CD8-positive, alpha-beta T cell (primary cell): ENCODE measurements at regions of chr6 and their contacts with region 1.

Region 1: GRCh38 chr6:139134817-139135581 is at the start of gene HECA:
- DNase-seq: peak; percentile 98 to 100 (median 99)
- ATAC-seq: peak; percentile 81
- H3K4me3 ChIP-seq: peak within 1 kb of the TSS; percentile 79 to 84
- H3K4me3 Mint-ChIP-seq: peak within 1 kb of the TSS; percentile 91
- H3K27ac ChIP-seq: peak within 1 kb of the TSS; percentile 96 to 97
- H3K27ac Mint-ChIP-seq: peak within 1 kb of the TSS; percentile 98
- H3K4me1 ChIP-seq: peaks cover 55% of the 10 kb centered on the region
- H3K4me1 Mint-ChIP-seq: peaks cover 67% of the 10 kb centered on the region
- H3K27me3 ChIP-seq: no peaks in the 10 kb centered on the region
- H3K27me3 Mint-ChIP-seq: no peaks in the 10 kb centered on the region
- CTCF ChIP-seq: no peak
- total RNA-seq, gene HECA: 231 to 234 TPM

Region 2: DNA sequence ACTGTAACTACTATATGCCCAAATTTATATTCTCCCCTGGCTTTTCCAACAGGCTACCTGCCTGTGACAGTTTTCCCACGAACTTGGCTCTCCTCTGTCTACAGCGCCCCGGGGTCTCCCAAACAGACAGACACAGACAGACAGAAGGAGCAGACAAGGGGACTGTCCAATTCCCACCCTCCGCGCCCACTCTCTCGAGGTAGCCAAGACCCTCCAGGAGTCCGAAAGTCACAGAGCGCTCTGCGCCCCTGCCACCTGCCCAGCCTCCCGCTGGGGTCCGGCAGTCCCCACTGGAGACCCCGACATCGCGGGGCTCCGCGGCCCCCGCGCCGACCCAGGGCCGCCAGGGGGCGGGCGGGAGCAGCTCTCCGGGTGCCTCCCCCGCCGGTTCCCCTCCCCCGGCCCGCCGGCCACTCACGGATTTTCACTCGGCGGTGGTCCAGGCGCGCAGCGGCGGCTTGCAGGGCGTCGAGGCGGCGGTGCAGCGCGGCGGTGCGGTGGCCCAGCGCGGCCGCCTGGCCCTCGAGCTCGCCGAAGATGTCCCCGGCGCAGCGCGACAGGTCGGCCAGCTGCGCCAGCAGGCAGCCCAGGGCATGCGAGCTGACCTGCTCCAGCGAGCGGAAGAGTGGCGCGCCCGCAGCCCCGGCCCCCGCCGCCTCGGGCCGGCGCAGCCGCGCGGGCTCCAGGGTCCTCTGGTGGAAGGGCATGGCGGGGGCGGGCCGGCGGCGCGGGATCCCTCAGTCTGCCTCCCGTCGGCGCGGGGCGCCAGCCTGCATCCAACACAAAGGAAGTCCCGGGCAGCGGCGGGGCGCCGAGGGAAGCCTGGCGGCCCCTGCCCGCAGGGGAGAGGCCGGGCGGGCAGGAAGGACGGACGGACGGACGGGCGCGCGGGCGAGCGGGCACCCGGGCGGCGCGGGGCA is 442.7 kb before region 1 on chr6:
- CTCF ChIA-PET with region 1: no interaction called
- POLR2A ChIA-PET with region 1: no interaction called
- intact Hi-C with region 1: loop called in 1 of 2 experiments (anchors 5 kb)
- DNase-seq: peak; percentile 14 to 78 (median 48)
- ATAC-seq: peak; percentile 68
- H3K4me3 ChIP-seq: peak overlapping the region in 1 of 2 experiments; percentile 23
- H3K4me3 Mint-ChIP-seq: peak overlapping the region; percentile 81
- H3K27ac ChIP-seq: no peak overlapping the region
- H3K27ac Mint-ChIP-seq: no peak overlapping the region
- H3K4me1 ChIP-seq: peaks cover 5% of the 10 kb centered on the region
- H3K4me1 Mint-ChIP-seq: peaks cover 10% of the 10 kb centered on the region
- H3K27me3 ChIP-seq: peaks cover 0 to 6% of the 10 kb centered on the region in 2 experiments
- H3K27me3 Mint-ChIP-seq: peaks cover 30% of the 10 kb centered on the region
- CTCF ChIP-seq: peak; percentile 65

Region 3: DNA sequence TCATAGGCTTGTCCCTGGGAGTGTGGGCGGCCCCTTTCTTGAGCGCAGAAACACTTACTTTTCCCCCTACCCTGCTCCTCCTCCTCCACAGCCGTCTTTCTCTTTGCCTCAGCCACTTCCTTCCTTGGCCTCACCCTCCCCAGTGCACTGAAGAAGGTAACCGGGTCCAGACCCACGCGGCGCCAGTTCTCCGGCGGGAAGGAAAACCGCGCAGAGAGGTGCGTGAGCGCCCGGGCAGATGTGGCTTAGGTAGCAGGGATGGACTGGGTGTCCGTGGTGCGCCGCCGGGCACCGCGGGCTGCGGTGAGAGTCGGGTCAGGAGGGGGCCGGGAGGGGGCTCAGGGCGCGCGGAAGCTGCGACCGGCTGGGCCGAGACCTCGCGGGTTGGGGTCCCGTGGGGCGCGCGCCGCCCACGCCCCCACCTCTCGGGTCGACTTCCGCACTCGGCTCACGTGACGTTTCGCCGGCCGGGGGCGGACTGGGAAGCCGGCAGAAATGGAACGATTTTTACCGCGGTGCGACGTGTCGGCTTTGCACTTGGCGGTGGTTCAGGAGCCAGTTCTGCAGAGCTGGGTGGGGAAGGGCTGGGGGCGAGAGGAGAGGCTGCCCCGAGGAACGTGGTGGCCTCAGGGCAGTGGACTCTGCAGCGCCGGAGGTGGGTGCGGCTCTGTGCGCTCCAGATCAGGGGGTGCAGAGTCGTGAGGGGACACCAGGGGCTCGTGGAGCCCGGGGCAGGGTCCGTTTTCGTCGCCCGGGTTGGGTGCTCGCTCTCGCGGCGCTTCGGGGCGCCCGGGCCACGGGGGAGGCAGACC is 106.1 kb before region 1 on chr6 and contains the start of gene ABRACL:
- CTCF ChIA-PET with region 1: no interaction called
- POLR2A ChIA-PET with region 1: interaction called, 8 read pairs
- intact Hi-C with region 1: loop called in 1 of 2 experiments (anchors 2 kb)
- DNase-seq: peak; percentile 38 to 89 (median 74)
- ATAC-seq: peak; percentile 88
- H3K4me3 ChIP-seq: peak within 1 kb of the TSS; percentile 93 to 99
- H3K4me3 Mint-ChIP-seq: no peak within 1 kb of the TSS
- H3K27ac ChIP-seq: peak within 1 kb of the TSS; percentile 86 to 90
- H3K27ac Mint-ChIP-seq: peak within 1 kb of the TSS; percentile 96
- H3K4me1 ChIP-seq: peaks cover 24% of the 10 kb centered on the region
- H3K4me1 Mint-ChIP-seq: peaks cover 31% of the 10 kb centered on the region
- H3K27me3 ChIP-seq: no peaks in the 10 kb centered on the region
- H3K27me3 Mint-ChIP-seq: no peaks in the 10 kb centered on the region
- CTCF ChIP-seq: no peak
- total RNA-seq, gene ABRACL: 30.4 to 30.5 TPM

Region 4: GRCh38 chr6:139062932-139063646 is 71.9 kb before region 1 on chr6:
- CTCF ChIA-PET with region 1: no interaction called
- POLR2A ChIA-PET with region 1: no interaction called
- intact Hi-C with region 1: no loop called
- DNase-seq: no peak
- ATAC-seq: no peak
- H3K4me3 ChIP-seq: no peak overlapping the region
- H3K4me3 Mint-ChIP-seq: no peak overlapping the region
- H3K27ac ChIP-seq: no peak overlapping the region
- H3K27ac Mint-ChIP-seq: no peak overlapping the region
- H3K4me1 ChIP-seq: no peaks in the 10 kb centered on the region
- H3K4me1 Mint-ChIP-seq: no peaks in the 10 kb centered on the region
- H3K27me3 ChIP-seq: no peaks in the 10 kb centered on the region
- H3K27me3 Mint-ChIP-seq: peaks cover 4% of the 10 kb centered on the region
- CTCF ChIP-seq: no peak

Region 5: GRCh38 chr6:139153855-139154254 is 18.9 kb after region 1 on chr6:
- CTCF ChIA-PET with region 1: interaction called, 7 read pairs
- POLR2A ChIA-PET with region 1: interaction called, 14 read pairs
- intact Hi-C with region 1: no loop called
- DNase-seq: no peak
- ATAC-seq: no peak
- H3K4me3 ChIP-seq: no peak overlapping the region
- H3K4me3 Mint-ChIP-seq: peak overlapping the region; percentile 44
- H3K27ac ChIP-seq: peak overlapping the region in 1 of 2 experiments; percentile 4
- H3K27ac Mint-ChIP-seq: peak overlapping the region; percentile 3
- H3K4me1 ChIP-seq: peaks cover 79% of the 10 kb centered on the region
- H3K4me1 Mint-ChIP-seq: peaks cover 83% of the 10 kb centered on the region
- H3K27me3 ChIP-seq: no peaks in the 10 kb centered on the region
- H3K27me3 Mint-ChIP-seq: no peaks in the 10 kb centered on the region
- CTCF ChIP-seq: no peak

Region 6: GRCh38 chr6:139219271-139219729 is 84.3 kb after region 1 on chr6:
- CTCF ChIA-PET with region 1: interaction called, 10 read pairs
- POLR2A ChIA-PET with region 1: no interaction called
- intact Hi-C with region 1: no loop called
- DNase-seq: peak; percentile 40 to 84 (median 73)
- ATAC-seq: peak; percentile 96
- H3K4me3 ChIP-seq: no peak overlapping the region
- H3K4me3 Mint-ChIP-seq: no peak overlapping the region
- H3K27ac ChIP-seq: no peak overlapping the region
- H3K27ac Mint-ChIP-seq: peak overlapping the region; percentile 82
- H3K4me1 ChIP-seq: peaks cover 11% of the 10 kb centered on the region
- H3K4me1 Mint-ChIP-seq: peaks cover 13% of the 10 kb centered on the region
- H3K27me3 ChIP-seq: no peaks in the 10 kb centered on the region
- H3K27me3 Mint-ChIP-seq: no peaks in the 10 kb centered on the region
- CTCF ChIP-seq: peak; percentile 66

Region 7: DNA sequence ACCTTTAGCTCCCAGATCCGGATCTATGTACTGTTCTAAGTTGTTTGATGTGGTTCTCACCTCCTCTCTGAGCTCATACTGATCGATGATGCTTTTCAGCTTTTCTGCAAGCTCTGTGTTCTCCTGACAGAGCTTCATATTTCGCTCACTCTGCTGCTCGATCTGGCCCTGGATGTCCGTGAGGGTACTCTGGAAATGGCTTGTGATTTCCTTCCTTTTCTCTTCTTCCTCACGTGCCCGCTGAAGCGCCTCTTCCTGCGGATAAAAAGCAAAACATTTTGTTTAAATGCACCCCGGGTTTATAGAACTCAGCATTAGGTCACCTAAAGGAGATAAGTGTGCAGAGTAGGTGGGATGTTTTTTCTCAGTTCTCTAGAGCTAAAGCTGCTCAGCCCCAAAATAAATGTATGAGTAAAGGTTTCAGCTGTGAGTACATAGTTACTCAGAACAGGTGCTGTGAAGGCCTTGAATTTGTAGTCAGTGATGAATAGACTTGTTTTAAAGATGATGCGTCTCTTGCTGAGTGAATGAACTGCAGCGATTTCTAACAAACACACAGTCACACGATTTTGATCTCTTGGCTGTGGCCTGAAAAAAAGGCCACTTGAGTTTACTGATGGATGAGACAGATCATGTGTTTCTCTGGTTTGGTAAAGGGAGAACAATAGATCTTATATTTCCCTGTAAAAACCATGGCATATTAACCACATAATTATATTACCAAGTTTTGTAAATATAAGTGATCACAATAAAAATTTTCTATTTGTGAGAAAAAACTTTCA is 127.7 kb after region 1 on chr6:
- CTCF ChIA-PET with region 1: no interaction called
- POLR2A ChIA-PET with region 1: no interaction called
- intact Hi-C with region 1: no loop called
- DNase-seq: peak in 3 of 9 experiments; percentile 10 to 72 (median 52)
- ATAC-seq: peak; percentile 90
- H3K4me3 ChIP-seq: peak overlapping the region in 1 of 2 experiments; percentile 19
- H3K4me3 Mint-ChIP-seq: peak overlapping the region; percentile 77
- H3K27ac ChIP-seq: peak overlapping the region in 1 of 2 experiments; percentile 51
- H3K27ac Mint-ChIP-seq: peak overlapping the region; percentile 84
- H3K4me1 ChIP-seq: peaks cover 13% of the 10 kb centered on the region
- H3K4me1 Mint-ChIP-seq: peaks cover 21% of the 10 kb centered on the region
- H3K27me3 ChIP-seq: no peaks in the 10 kb centered on the region
- H3K27me3 Mint-ChIP-seq: no peaks in the 10 kb centered on the region
- CTCF ChIP-seq: no peak

Region 8: DNA sequence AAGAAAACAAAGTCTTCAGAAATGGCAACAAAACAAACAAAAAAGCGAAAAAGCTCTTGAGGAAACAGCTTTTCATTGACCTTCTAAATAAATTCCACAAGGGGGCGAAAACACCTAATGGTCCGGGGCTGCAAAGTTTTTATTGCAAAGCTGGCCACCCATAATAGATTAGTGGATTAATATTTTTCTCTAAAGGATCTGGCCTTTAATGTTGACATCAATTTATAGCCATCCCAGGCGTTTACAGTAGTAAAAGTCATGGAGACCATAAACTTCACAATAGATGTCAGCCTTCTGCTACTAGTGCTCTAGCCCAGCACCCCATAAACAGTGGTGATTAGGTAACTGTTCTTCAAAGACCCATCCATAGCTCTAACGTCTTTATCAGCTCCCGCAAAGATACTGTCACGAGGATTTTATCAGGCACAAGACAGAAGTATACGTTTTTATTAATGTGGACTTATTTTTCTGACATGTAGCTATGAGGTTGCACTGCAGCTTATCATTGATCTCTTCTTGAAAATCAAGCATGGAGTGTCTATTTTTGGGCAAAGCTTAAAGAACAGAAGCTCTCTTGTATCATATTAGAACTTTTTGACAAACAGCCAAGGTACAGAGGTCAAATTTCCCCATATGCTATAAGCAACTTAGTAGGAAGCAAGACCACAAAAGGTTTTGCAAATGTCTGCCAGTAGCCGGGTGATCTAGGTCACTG is 234.7 kb after region 1 on chr6:
- CTCF ChIA-PET with region 1: interaction called, 16 read pairs
- POLR2A ChIA-PET with region 1: interaction called, 33 read pairs
- intact Hi-C with region 1: loop called (anchors 1 kb)
- DNase-seq: peak in 2 of 9 experiments; percentile 56 to 69
- ATAC-seq: no peak
- H3K4me3 ChIP-seq: no peak overlapping the region
- H3K4me3 Mint-ChIP-seq: peak overlapping the region; percentile 66
- H3K27ac ChIP-seq: peak overlapping the region in 1 of 2 experiments; percentile 86
- H3K27ac Mint-ChIP-seq: peak overlapping the region; percentile 98
- H3K4me1 ChIP-seq: peaks cover 31% of the 10 kb centered on the region
- H3K4me1 Mint-ChIP-seq: peaks cover 49% of the 10 kb centered on the region
- H3K27me3 ChIP-seq: no peaks in the 10 kb centered on the region
- H3K27me3 Mint-ChIP-seq: no peaks in the 10 kb centered on the region
- CTCF ChIP-seq: peak; percentile 88

Region 9: GRCh38 chr6:139625998-139626975 is 491.3 kb after region 1 on chr6:
- CTCF ChIA-PET with region 1: no interaction called
- POLR2A ChIA-PET with region 1: no interaction called
- intact Hi-C with region 1: no loop called
- DNase-seq: no peak
- ATAC-seq: no peak
- H3K4me3 ChIP-seq: no peak overlapping the region
- H3K4me3 Mint-ChIP-seq: no peak overlapping the region
- H3K27ac ChIP-seq: no peak overlapping the region
- H3K27ac Mint-ChIP-seq: no peak overlapping the region
- H3K4me1 ChIP-seq: no peaks in the 10 kb centered on the region
- H3K4me1 Mint-ChIP-seq: no peaks in the 10 kb centered on the region
- H3K27me3 ChIP-seq: no peaks in the 10 kb centered on the region
- H3K27me3 Mint-ChIP-seq: peaks cover 5% of the 10 kb centered on the region
- CTCF ChIP-seq: no peak